Activated T-helper 2 cell treated with anti-CD3 and anti-CD28 coated beads, Interferon-gamma antibody, Interleukin-2, Interleukin-4, amounts not matched to agents 10 μg/mL and 5 μg/mL and 100 μg/mL, durations not matched to agents 14 hours and 24 hours and 36 hours (primary cell): ENCODE measurements at regions of chr14 and their contacts with region 1.

Region 1: GRCh38 chr14:50363714-50364111 is 33.0 kb downstream of the CDKL1 start:
- DNase-seq: peak; percentile 59
- H3K4me3 Mint-ChIP-seq: peak overlapping the region; percentile 79
- H3K27ac Mint-ChIP-seq: peak overlapping the region; percentile 88
- H3K4me1 Mint-ChIP-seq: peaks cover 29% of the 10 kb centered on the region
- H3K27me3 Mint-ChIP-seq: no peaks in the 10 kb centered on the region

Region 2: DNA sequence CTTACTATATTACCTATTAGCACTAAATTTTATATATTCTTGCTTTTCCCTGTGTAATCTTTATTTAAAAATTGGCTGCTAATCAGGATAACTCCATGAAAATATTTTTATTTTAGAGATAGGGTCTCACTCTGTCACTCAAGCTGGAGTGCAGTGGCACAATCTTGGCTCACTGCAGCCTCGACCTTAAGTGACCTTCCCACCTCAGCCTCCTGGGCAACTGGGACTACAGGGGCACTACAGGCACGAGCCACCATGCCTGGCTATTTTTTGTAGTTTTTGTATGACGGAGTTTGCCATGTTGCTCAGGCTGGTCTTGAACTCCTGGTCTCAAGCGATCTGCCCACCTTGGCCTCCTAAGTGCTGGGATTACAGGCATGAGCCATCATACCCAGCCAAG is 214.9 kb before region 1 on chr14:
- intact Hi-C with region 1: no loop called
- DNase-seq: no peak
- H3K4me3 Mint-ChIP-seq: no peak overlapping the region
- H3K27ac Mint-ChIP-seq: no peak overlapping the region
- H3K4me1 Mint-ChIP-seq: no peaks in the 10 kb centered on the region
- H3K27me3 Mint-ChIP-seq: no peaks in the 10 kb centered on the region

Region 3: GRCh38 chr14:50311975-50312733 is 51.6 kb before region 1 on chr14 and contains the starts of genes DMAC2L and L2HGDH:
- intact Hi-C with region 1: no loop called
- DNase-seq: peak; percentile 89
- H3K4me3 Mint-ChIP-seq: peak within 1 kb of the TSS; percentile 91
- H3K27ac Mint-ChIP-seq: peak within 1 kb of the TSS; percentile 98
- H3K4me1 Mint-ChIP-seq: peaks cover 47% of the 10 kb centered on the region
- H3K27me3 Mint-ChIP-seq: no peaks in the 10 kb centered on the region
- total RNA-seq, gene DMAC2L: 13.6 and 16.2 TPM in 2 replicates
- total RNA-seq, gene L2HGDH: 14.1 and 14.2 TPM in 2 replicates

Region 4: DNA sequence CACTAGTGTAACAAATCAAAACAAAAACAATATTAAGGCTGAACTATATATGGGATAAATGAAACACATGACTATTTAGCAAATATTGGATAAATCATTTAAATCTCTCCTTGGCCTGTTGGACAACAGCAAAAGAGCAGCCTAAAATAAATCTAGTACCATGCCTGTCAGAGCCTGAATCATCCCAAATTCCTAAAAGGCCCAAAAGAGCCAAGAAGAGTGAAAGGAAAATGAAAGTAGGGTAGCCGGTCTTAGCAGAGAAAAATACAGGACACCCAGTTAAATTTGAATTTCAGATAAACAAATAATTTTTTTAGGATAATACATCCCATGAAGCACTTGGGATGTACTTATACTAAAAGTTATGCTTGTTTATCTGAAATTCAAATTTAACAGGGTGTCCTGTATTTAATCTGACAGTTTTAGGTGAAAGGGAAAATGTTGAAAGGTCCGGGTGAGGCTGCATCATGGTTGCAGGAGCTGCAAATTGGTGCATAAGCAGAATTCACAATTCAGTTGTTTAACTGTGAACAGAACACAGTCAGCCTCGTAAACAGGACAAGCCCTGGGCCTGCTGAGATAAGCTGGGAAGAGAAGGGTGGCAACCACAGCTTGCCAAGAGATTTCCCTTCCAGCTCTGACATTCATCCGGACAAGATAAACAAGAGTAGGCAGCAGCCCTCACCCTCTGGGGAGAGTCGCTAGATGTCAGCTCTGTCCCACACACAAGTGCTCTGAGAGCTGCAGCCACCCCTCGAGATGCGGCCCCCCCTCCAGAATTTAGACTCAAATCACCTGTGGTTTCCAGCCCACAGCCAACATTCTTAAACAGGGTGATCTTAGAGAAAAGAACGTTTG is 21.3 kb before region 1 on chr14:
- intact Hi-C with region 1: loop called (anchors 2 kb)
- DNase-seq: peak; percentile 33
- H3K4me3 Mint-ChIP-seq: no peak overlapping the region
- H3K27ac Mint-ChIP-seq: peak overlapping the region; percentile 44
- H3K4me1 Mint-ChIP-seq: peaks cover 27% of the 10 kb centered on the region
- H3K27me3 Mint-ChIP-seq: peaks cover 11% of the 10 kb centered on the region